ENCODE measurements at regions of chr9 and their contacts with region 1.

Region 1: GRCh38 chr9:131733541-131734061 is 6.3 kb downstream of the RAPGEF1 start:
- DNase-seq: peak; percentile 90
- H3K4me3 Mint-ChIP-seq: peak overlapping the region; percentile 52
- H3K27ac Mint-ChIP-seq: peak overlapping the region; percentile 72
- H3K4me1 Mint-ChIP-seq: peaks cover 56% of the 10 kb centered on the region
- H3K27me3 Mint-ChIP-seq: no peaks in the 10 kb centered on the region
- CTCF ChIP-seq: no peak

Region 2: GRCh38 chr9:131635285-131635684 is 98.3 kb before region 1 on chr9:
- CTCF ChIA-PET with region 1: interaction called, 6 read pairs
- POLR2A ChIA-PET with region 1: interaction called, 20 read pairs
- intact Hi-C with region 1: no loop called
- DNase-seq: peak; percentile 97
- H3K4me3 Mint-ChIP-seq: no peak overlapping the region
- H3K27ac Mint-ChIP-seq: peak overlapping the region; percentile 77
- H3K4me1 Mint-ChIP-seq: peaks cover 30% of the 10 kb centered on the region
- H3K27me3 Mint-ChIP-seq: no peaks in the 10 kb centered on the region
- CTCF ChIP-seq: no peak

Region 3: GRCh38 chr9:131656356-131657036 is 77.1 kb before region 1 on chr9:
- CTCF ChIA-PET with region 1: interaction called, 5 read pairs
- POLR2A ChIA-PET with region 1: interaction called, 16 read pairs
- intact Hi-C with region 1: loop called (anchors 5 kb)
- DNase-seq: no peak
- H3K4me3 Mint-ChIP-seq: no peak overlapping the region
- H3K27ac Mint-ChIP-seq: peak overlapping the region; percentile 7
- H3K4me1 Mint-ChIP-seq: peaks cover 36% of the 10 kb centered on the region
- H3K27me3 Mint-ChIP-seq: no peaks in the 10 kb centered on the region
- CTCF ChIP-seq: no peak

Region 4: GRCh38 chr9:131704141-131704983 is 29.2 kb before region 1 on chr9:
- CTCF ChIA-PET with region 1: interaction called, 4 read pairs
- POLR2A ChIA-PET with region 1: interaction called, 32 read pairs
- intact Hi-C with region 1: no loop called
- DNase-seq: peak; percentile 59
- H3K4me3 Mint-ChIP-seq: no peak overlapping the region
- H3K27ac Mint-ChIP-seq: no peak overlapping the region
- H3K4me1 Mint-ChIP-seq: peaks cover 41% of the 10 kb centered on the region
- H3K27me3 Mint-ChIP-seq: no peaks in the 10 kb centered on the region
- CTCF ChIP-seq: no peak

Region 5: GRCh38 chr9:132923346-132923902 is 1189.8 kb after region 1 on chr9:
- CTCF ChIA-PET with region 1: no interaction called
- POLR2A ChIA-PET with region 1: no interaction called
- intact Hi-C with region 1: no loop called
- DNase-seq: peak; percentile 60
- H3K4me3 Mint-ChIP-seq: no peak overlapping the region
- H3K27ac Mint-ChIP-seq: no peak overlapping the region
- H3K4me1 Mint-ChIP-seq: no peaks in the 10 kb centered on the region
- H3K27me3 Mint-ChIP-seq: no peaks in the 10 kb centered on the region
- CTCF ChIP-seq: no peak

Measured in MCF 10A (cell line).